Naive thymus-derived CD4-positive, alpha-beta T cell (primary cell): ENCODE measurements at regions of chr17 and their contacts with region 1.

Region 1: GRCh38 chr17:76103274-76104139 is at the start of gene EXOC7:
- DNase-seq: peak; percentile 88 to 96 (median 93)
- ATAC-seq: peak; percentile 96
- H3K4me3 ChIP-seq: peak within 1 kb of the TSS; percentile 72
- H3K4me3 Mint-ChIP-seq: peak within 1 kb of the TSS; percentile 82 to 98 (median 96)
- H3K27ac ChIP-seq: peak within 1 kb of the TSS; percentile 82
- H3K27ac Mint-ChIP-seq: peak within 1 kb of the TSS; percentile 96 to 99 (median 97)
- H3K4me1 ChIP-seq: peaks cover 6 to 16% of the 10 kb centered on the region in 2 donors
- H3K4me1 Mint-ChIP-seq: peaks cover 6 to 47% (median 32%) of the 10 kb centered on the region in 7 donors
- H3K27me3 ChIP-seq: no peaks in the 10 kb centered on the region
- H3K27me3 Mint-ChIP-seq: no peaks in the 10 kb centered on the region
- total RNA-seq, gene EXOC7: 112 to 204 (median 160) TPM

Region 2: DNA sequence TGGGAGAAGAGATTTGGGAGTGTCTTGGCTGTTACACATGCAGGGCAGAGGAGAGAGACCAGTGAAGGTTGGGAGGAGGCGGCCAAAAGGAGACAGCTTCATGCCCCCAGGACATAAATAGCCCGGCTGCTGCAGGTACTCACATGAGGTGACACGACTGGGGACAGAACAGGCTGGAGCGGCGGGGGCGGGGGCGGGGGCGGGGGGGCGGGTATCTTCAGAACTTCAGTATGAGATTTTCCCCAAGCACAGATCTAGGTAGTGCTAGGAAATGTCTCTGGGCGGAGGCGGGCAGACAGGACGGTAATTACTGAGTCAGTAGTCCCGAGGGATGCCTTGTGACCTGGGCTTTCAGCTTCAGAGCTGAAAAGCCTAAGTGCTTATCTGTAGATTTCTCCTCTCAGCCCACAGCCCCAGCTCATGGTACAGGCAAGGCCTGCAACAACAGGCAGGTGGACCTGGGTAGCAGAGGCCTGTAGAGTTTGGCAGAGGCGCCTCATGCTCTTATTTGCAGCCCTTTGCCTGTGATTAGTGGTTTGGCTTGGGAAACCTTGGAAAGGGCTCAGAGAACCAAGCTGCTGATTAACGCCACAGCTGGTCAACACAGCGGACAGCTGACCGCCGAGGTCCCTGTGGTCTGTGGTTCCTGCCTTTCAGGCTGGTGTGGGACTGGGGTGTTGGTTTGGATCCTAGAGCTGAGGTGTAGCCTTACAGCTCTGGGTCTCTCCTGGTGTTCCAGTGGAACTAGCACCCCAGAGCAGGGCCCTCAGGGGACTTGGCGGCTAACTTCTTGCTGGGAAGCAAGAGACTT is 294.4 kb before region 1 on chr17:
- CTCF ChIA-PET with region 1: no interaction called
- POLR2A ChIA-PET with region 1: no interaction called
- intact Hi-C with region 1: no loop called
- DNase-seq: no peak
- ATAC-seq: no peak
- H3K4me3 ChIP-seq: no peak overlapping the region
- H3K4me3 Mint-ChIP-seq: no peak overlapping the region
- H3K27ac ChIP-seq: no peak overlapping the region
- H3K27ac Mint-ChIP-seq: peak overlapping the region in 3 of 9 donors; percentile 31 to 72 (median 68)
- H3K4me1 ChIP-seq: no peaks in the 10 kb centered on the region
- H3K4me1 Mint-ChIP-seq: peaks cover 0 to 8% (median 4%) of the 10 kb centered on the region in 7 donors
- H3K27me3 ChIP-seq: no peaks in the 10 kb centered on the region
- H3K27me3 Mint-ChIP-seq: no peaks in the 10 kb centered on the region

Region 3: DNA sequence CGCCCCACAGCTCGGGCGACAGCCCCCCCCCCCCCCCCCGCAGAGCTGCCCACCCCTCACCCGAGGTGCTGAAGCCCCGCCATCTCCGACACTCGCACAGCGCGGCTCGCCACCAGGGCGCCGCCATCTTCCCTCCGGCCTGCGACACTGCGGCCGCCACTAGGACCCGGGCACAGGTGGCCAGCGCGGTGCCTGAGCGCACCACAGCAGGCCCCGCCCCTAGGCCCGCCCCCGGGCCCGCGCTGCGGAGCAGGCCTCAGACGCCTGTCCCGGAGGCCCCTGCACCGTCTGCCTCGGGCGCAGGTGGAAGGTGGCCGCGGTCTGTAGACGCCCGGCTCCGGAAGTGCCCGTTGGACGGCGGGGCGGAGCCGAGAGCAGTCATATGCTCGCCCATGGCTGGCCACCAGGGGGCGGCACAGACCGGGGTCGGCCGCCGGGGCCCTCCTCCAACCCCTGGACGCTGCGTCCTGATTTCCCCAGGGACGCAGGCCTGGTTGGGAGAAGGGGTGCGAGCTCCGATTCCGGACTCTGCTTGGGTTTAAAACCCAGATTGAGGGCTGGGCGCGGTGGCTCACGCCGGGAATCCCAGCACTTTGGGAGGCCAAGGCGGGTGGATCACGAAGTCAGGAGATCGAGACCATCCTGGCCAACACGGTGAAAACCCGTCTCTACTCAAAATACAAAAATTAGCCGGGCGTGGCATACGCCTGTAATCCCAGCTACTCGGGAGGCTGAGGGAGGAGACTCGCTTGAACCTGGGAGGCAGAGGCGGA is 198.6 kb before region 1 on chr17 and contains the start of gene MRPL38:
- CTCF ChIA-PET with region 1: interaction called, 3 read pairs
- POLR2A ChIA-PET with region 1: no interaction called
- intact Hi-C with region 1: loop called in 1 of 2 experiments (anchors 2 kb)
- DNase-seq: peak; percentile 88 to 97 (median 91)
- ATAC-seq: peak; percentile 99
- H3K4me3 ChIP-seq: peak within 1 kb of the TSS; percentile 72
- H3K4me3 Mint-ChIP-seq: peak within 1 kb of the TSS; percentile 83 to 97 (median 92)
- H3K27ac ChIP-seq: peak within 1 kb of the TSS; percentile 85
- H3K27ac Mint-ChIP-seq: peak within 1 kb of the TSS; percentile 90 to 97 (median 95)
- H3K4me1 ChIP-seq: peaks cover 0 to 5% of the 10 kb centered on the region in 2 donors
- H3K4me1 Mint-ChIP-seq: peaks cover 2 to 16% (median 14%) of the 10 kb centered on the region in 7 donors
- H3K27me3 ChIP-seq: no peaks in the 10 kb centered on the region
- H3K27me3 Mint-ChIP-seq: no peaks in the 10 kb centered on the region
- total RNA-seq, gene MRPL38: 81.0 to 154 (median 128) TPM

Region 4: GRCh38 chr17:76027159-76027839 is 76.2 kb before region 1 on chr17 and contains the start of gene EVPL:
- CTCF ChIA-PET with region 1: interaction called, 3 read pairs
- POLR2A ChIA-PET with region 1: interaction called, 10 read pairs
- intact Hi-C with region 1: no loop called
- DNase-seq: no peak
- ATAC-seq: no peak
- H3K4me3 ChIP-seq: no peak within 1 kb of the TSS
- H3K4me3 Mint-ChIP-seq: peak within 1 kb of the TSS in 1 of 10 donors; percentile 84
- H3K27ac ChIP-seq: peak within 1 kb of the TSS; percentile 40
- H3K27ac Mint-ChIP-seq: peak within 1 kb of the TSS in 6 of 9 donors; percentile 25 to 97 (median 80)
- H3K4me1 ChIP-seq: peaks cover 8 to 23% of the 10 kb centered on the region in 2 donors
- H3K4me1 Mint-ChIP-seq: peaks cover 9 to 31% (median 26%) of the 10 kb centered on the region in 7 donors
- H3K27me3 ChIP-seq: no peaks in the 10 kb centered on the region
- H3K27me3 Mint-ChIP-seq: no peaks in the 10 kb centered on the region
- total RNA-seq, gene EVPL: 0.07 to 2.7 (median 0.39) TPM

Region 5: DNA sequence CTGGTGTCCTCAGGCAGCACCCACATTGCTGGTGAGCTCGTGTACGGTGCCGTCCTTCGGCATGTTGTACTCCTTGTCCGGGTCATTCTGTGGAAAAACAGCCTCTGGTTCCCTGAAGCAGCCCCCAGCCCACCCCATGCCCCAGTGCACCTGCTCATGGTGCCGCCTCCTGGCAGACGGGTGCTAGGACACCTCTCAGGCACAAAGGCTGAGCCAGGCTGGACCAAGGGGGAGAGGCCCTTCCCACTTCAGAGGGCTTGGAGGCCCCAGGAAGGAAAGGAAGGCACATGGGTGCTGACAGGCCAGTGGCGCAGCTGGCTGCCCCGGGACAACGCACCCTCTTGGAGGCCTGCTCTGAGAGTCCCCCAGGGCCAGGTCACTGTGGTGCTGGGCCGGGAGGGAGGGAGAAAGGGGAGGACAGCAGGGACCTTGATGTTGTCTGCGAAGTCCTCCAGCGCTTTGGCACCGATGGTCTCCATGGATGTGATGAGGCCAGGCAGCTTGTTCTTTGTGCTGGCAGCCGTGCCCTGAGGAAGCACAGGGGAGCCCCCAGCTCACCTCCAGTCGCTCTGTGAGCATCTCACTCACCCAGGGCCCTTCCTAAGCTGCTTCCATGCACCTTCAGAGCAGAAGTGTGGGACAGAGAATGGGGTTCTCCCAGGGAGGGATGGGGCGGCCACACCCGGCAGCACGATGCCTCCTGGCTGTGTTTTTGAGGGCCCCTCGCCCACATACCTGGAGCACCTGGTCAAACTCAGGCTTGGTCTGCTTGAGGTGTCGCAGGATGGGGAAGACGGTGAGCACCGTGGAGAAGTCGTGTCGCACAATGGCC is 15.3 kb before region 1 on chr17:
- CTCF ChIA-PET with region 1: no interaction called
- POLR2A ChIA-PET with region 1: interaction called, 13 read pairs
- intact Hi-C with region 1: no loop called
- DNase-seq: no peak
- ATAC-seq: no peak
- H3K4me3 ChIP-seq: no peak overlapping the region
- H3K4me3 Mint-ChIP-seq: no peak overlapping the region
- H3K27ac ChIP-seq: no peak overlapping the region
- H3K27ac Mint-ChIP-seq: no peak overlapping the region
- H3K4me1 ChIP-seq: no peaks in the 10 kb centered on the region
- H3K4me1 Mint-ChIP-seq: peaks cover 0 to 11% (median 6%) of the 10 kb centered on the region in 7 donors
- H3K27me3 ChIP-seq: no peaks in the 10 kb centered on the region
- H3K27me3 Mint-ChIP-seq: no peaks in the 10 kb centered on the region

Region 6: DNA sequence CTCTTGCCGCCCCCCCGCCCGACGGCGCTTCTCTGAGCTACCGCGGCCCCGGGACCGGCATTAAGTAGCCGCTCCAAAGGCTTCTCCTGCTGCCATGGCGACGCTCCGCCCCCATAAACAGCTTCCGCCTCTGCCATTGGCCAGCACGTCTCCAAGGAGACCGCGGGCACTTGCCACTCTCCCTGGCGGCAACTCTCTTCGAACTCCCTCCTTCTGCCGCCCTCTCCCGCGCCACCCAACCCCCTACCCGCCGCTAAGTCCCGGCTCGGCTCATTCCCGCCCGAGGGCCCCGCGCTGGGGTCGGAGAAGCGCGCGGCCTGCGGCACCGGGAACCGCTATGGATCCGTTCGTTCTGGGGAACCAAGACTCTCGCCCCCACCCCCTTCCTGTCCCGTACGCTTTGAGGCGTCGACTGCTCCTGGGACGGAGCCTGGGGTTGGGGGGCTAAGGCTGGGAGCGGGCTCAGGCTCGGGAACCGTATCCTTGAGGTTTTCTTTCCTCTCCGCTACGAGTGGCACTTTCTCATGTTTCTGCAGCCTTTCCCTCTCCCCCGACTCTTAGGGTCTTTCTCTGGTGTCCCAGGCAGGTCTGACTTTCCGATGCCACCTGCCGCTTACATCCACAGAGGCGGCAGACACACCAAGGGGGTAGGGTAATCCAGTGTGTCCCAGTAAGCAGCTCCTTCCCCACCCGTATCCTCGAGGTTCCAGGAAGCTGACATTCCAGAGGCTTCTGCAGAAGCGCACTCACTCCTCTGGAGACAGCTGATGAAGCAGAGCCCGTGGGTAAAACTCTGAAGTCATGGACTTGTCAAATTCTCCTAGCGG is 37.9 kb after region 1 on chr17 and contains the start of gene FOXJ1:
- CTCF ChIA-PET with region 1: no interaction called
- POLR2A ChIA-PET with region 1: no interaction called
- intact Hi-C with region 1: loop called in 1 of 2 experiments (anchors 1 kb)
- DNase-seq: peak; percentile 88 to 94 (median 91)
- ATAC-seq: peak; percentile 87
- H3K4me3 ChIP-seq: peak within 1 kb of the TSS; percentile 49
- H3K4me3 Mint-ChIP-seq: peak within 1 kb of the TSS; percentile 82 to 89 (median 85)
- H3K27ac ChIP-seq: peak within 1 kb of the TSS; percentile 61
- H3K27ac Mint-ChIP-seq: peak within 1 kb of the TSS; percentile 80 to 99 (median 93)
- H3K4me1 ChIP-seq: peaks cover 50 to 58% of the 10 kb centered on the region in 2 donors
- H3K4me1 Mint-ChIP-seq: peaks cover 42 to 63% (median 59%) of the 10 kb centered on the region in 7 donors
- H3K27me3 ChIP-seq: no peaks in the 10 kb centered on the region
- H3K27me3 Mint-ChIP-seq: peaks cover 0 to 26% (median 0%) of the 10 kb centered on the region in 5 donors
- total RNA-seq, gene FOXJ1: 0.29 to 2.2 (median 1.4) TPM

Region 7: DNA sequence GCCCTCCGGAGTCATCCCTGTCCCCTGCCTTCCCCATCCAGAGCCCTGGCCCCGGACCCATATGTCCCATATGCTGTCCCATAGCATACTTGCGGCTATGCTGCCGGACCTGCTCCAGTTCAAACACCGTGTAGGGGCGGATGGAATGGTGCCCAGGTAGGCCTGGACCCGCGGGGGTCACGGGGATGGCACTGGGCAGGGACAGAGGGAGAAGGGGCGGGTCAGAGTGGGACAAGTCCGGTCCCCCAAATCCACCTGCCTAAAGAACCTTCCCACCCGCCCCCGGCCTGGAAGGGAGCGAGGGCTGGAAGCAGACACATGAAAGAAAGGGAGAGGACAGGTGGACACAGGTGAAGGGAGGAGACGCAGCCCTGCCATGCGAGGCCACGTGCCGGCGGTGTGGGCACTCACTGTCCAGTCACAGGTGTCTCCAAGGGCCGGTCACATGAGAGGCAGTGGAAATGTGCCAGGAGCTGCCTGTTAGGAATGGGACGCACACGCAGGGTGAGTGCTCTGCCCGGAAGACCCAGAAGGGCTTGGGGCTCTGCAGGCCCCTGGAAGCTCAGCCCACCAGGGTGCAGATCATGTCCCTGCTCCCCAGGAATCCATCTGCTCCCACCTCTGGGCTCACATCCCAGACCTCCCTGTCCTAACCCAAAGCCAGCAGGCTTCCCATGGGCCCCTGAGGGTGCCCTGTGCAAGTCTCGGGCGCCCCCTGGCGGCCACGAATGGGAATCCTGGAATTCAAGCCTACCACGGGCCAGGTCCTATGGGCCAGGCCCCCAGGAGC is 175.6 kb after region 1 on chr17:
- CTCF ChIA-PET with region 1: interaction called, 7 read pairs
- POLR2A ChIA-PET with region 1: interaction called, 11 read pairs
- intact Hi-C with region 1: loop called in 1 of 2 experiments (anchors 1 kb)
- DNase-seq: peak; percentile 69 to 89 (median 81)
- ATAC-seq: peak; percentile 87
- H3K4me3 ChIP-seq: no peak overlapping the region
- H3K4me3 Mint-ChIP-seq: no peak overlapping the region
- H3K27ac ChIP-seq: no peak overlapping the region
- H3K27ac Mint-ChIP-seq: peak overlapping the region in 7 of 9 donors; percentile 22 to 74 (median 46)
- H3K4me1 ChIP-seq: peaks cover 5 to 17% of the 10 kb centered on the region in 2 donors
- H3K4me1 Mint-ChIP-seq: peaks cover 7 to 29% (median 27%) of the 10 kb centered on the region in 7 donors
- H3K27me3 ChIP-seq: no peaks in the 10 kb centered on the region
- H3K27me3 Mint-ChIP-seq: no peaks in the 10 kb centered on the region